ENCODE measurements at regions of chr5 and their contacts with region 1.

Region 1: DNA sequence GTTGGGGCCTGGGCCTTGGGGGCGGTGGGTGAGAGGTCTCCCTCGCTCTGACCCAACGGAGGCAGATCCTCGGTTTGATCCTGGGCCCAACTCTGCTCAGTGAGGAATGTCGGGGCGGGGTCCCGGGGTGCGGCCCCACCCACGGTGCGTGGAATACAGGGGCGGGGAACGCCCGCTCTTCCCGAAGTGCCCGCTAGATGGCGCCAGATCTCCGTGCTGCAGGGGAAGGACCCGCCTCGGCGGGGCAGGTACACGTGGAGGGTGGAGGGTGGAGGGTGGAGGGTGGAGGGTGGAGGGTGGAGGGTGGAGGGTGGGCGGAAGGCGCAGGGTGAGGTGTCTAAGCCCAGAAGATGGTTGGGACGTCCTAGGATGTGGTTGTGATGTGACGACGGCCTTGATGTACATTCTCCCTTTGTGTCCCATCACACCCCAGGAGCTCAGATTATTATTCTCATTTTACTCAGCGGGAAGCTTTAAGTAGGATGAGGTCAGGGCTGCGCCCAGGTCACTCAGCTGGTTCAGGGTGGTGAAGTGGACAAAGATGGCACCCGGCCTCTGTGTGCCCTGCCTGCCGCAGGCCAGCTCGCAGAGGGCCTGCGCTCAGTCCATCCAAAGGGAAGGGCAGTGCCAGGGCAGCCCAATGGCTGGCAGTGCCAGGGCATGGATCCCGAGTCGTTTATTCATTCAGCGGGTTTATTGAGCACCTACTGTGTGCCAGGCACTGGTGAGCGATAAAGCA is 9.4 kb upstream of the RPS14 start:
- DNase-seq: no peak
- H3K4me3 ChIP-seq: peak overlapping the region; percentile 29; the same call in 1 of the 2 replicates
- H3K27ac ChIP-seq: no peak overlapping the region
- H3K27me3 ChIP-seq: no peaks in the 10 kb centered on the region
- CTCF ChIP-seq: peak; percentile 76

Region 2: GRCh38 chr5:150497274-150497988 is 38.4 kb after region 1 on chr5:
- CTCF ChIA-PET with region 1: interaction called, 11 read pairs
- POLR2A ChIA-PET with region 1: no interaction called
- DNase-seq: peak; percentile 83
- H3K4me3 ChIP-seq: peak overlapping the region; percentile 47
- H3K27ac ChIP-seq: peak overlapping the region; percentile 91
- H3K27me3 ChIP-seq: no peaks in the 10 kb centered on the region
- CTCF ChIP-seq: no peak

Region 3: DNA sequence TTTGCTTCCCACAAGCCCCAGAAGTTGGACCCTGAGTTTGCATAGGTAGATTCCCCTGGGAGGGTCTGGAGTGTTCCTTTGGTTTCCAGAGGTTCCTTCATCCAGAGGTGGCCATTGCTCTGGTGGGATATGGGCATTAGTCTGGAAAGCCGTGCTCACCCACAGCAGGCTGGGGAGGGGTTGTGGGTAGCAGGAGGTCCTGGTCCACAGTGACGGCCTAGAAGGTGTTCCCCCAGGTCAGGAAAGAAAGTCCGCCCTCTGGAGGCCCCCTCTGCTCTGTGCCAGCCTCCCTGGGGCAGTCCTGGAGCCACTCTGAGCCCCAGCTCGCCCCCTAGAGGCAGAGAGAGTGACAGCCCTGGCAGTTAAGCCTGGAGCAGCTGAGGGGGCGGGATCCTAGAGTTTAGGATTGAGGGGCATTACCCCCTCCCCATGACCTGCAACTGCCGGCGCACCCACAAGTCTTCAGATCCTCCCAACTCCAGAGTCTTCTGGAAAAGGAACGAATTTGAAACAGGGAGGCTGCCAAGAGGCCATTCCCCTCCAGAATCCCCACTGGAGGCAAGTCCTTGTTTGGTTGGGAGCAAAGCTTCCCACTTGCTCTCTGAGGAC is 85.7 kb after region 1 on chr5:
- CTCF ChIA-PET with region 1: interaction called, 52 read pairs
- POLR2A ChIA-PET with region 1: interaction called, 3 read pairs
- DNase-seq: no peak
- H3K4me3 ChIP-seq: no peak overlapping the region
- H3K27ac ChIP-seq: no peak overlapping the region
- H3K27me3 ChIP-seq: no peaks in the 10 kb centered on the region
- CTCF ChIP-seq: peak; percentile 80

Region 4: DNA sequence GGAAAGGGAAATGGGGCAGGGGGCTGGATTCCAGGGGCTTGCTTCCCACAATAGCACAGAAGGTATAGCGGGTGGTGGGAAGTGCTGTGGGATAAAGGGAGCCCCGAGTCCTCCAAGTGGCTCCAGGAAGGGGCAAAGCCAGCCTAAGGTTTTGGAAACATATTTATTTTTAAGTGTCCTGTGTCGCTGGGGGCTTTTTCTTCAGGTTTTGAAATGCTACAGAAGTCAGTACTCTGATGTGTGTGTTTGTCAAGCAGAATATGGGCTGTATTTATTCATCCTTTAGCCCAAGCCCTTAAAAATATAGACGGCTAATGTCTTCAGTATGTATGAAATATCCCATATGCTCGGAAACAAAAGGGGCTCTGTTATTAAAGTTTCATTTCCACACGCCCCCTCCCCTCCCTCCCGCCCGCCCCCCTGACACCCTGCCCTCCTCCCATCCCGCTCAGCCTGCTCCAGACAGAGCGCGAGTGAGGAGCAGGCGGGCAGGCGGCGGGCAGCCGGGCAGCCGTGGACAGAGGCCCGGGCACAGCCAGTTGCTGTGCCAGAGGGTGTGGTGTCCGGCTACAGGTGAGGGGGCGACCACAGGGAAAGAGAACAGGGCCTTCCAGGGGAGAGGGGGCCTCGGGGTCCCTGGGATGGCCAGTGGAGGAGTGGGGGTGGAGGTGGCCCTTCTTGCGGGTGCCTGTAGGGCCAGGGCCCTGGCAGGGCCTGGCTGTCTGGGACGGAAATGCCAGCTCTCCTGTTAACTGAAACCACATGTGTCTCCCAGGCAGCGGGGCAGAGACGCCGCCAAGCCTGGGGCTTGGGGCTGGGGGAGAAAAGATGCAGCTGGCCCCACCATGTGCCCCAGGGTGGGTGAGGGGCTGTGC is 141.9 kb after region 1 on chr5:
- CTCF ChIA-PET with region 1: no interaction called
- POLR2A ChIA-PET with region 1: no interaction called
- DNase-seq: no peak
- H3K4me3 ChIP-seq: no peak overlapping the region
- H3K27ac ChIP-seq: no peak overlapping the region
- H3K27me3 ChIP-seq: peaks cover 3% of the 10 kb centered on the region
- CTCF ChIP-seq: no peak

Region 5: DNA sequence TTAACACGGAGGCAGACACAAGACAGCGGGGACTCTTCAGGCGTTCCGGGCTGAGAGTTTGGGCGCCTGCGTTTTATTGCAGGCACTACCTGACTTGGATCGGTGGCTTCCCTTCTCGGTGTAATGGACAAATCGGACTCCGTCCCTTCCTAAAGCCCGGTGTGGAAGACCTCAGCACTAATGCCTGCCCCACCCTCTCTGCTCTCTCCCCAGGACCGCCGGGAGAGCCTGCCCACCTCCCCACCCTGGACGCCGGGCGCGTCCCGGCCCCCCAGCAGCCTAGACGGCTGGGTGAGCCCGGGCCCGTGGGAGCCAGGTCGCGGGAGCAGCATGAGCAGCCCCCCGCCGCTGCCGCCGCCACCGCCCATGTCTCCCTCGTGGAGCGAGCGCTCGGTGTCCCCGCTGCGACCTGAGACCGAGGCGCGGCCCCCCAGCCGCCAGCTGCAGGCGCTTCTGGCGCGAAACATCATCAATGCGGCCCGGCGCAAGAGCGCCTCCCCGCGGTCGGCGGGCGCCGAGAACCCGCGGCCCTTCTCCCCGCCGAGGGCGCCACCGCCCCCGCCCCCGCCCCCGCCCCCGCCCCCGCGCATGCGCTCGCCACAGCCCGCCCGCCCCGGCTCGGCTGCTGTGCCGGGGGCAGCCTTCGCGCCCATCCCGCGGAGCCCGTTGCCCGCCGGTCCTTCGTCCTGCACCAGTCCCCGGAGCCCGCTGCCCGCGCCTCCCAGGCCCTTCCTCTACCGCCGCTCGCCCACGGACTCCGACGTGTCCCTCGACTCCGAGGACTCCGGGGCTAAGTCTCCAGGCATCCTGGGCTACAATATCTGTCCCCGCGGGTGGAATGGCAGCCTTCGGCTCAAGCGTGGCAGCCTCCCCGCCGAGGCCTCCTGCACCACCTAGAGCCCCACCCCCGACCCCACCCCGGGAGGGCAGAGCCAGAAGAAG is 197.5 kb after region 1 on chr5:
- CTCF ChIA-PET with region 1: interaction called, 21 read pairs
- POLR2A ChIA-PET with region 1: no interaction called
- DNase-seq: no peak
- H3K4me3 ChIP-seq: peak overlapping the region; percentile 59
- H3K27ac ChIP-seq: no peak overlapping the region
- H3K27me3 ChIP-seq: peaks cover 4% of the 10 kb centered on the region
- CTCF ChIP-seq: peak; percentile 45

Measured in AG04450 (cell line).